HCT116 (cell line): ENCODE measurements at regions of chr5 and their contacts with region 1.

Region 1: DNA sequence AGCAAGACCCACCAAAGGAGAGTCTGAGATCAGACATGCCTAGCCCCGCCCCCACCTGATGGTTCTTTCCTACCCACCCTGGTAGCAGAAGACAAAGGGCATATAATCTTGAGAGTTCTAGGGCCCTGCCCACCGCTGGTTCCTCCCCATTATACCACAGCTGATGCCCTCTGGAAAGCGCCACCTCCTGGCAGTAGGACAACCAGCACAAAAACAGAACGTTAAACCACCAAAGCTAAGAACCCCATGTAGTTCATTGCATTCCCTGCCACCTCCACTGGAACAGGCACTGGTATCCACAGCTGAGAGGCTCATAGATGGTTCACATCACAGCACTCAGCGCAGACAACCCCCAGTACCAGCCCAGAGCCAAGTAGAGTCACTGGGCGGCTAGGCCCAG is 81.2 kb upstream of the TRPC7 start:
- DNase-seq: peak; percentile 8
- ATAC-seq: peak; percentile 83
- H3K4me3 ChIP-seq: no peak overlapping the region
- H3K27ac ChIP-seq: no peak overlapping the region
- H3K4me1 ChIP-seq: no peaks in the 10 kb centered on the region
- H3K27me3 ChIP-seq: 0 out of 2 replicates have a peak, but pooled peaks cover 9% of the 10 kb centered on the region
- CTCF ChIP-seq: peak; percentile 6 to 58 (median 56); a peak in 4 of 6 replicates
- POLR2A ChIP-seq: no peak
- RAD21 ChIP-seq: peak; percentile 18; the same call in 1 of the 2 replicates

Region 2: GRCh38 chr5:136482206-136482605 is 35.6 kb after region 1 on chr5:
- CTCF ChIA-PET with region 1: no interaction called
- POLR2A ChIA-PET with region 1: no interaction called
- RAD21 ChIA-PET with region 1: no interaction called
- intact Hi-C with region 1: loop called (anchors 1 kb)
- DNase-seq: no peak
- ATAC-seq: no peak
- H3K4me3 ChIP-seq: no peak overlapping the region
- H3K27ac ChIP-seq: no peak overlapping the region
- H3K4me1 ChIP-seq: no peaks in the 10 kb centered on the region
- H3K27me3 ChIP-seq: 0 out of 2 replicates have a peak, but pooled peaks cover 2% of the 10 kb centered on the region
- CTCF ChIP-seq: no peak
- POLR2A ChIP-seq: no peak
- RAD21 ChIP-seq: no peak

Region 3: DNA sequence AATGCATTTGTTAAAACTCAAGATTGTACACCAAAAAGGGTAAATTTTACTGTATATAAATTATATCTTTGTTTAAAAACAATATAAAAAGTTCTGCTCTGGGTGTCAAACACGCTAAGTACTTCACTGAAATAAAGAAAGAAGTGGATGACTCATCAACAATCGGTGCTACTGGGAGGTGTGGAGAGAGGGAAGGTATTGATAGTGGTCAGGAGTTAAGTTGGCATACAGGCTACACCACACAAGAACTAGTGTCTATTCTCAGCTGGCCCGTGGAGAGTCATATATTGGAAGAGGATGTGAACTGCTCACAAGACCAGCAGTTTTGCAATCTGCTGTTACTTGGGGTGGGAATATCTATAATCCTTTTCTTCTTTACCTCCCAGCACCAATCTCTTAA is 64.5 kb after region 1 on chr5:
- CTCF ChIA-PET with region 1: no interaction called
- POLR2A ChIA-PET with region 1: no interaction called
- RAD21 ChIA-PET with region 1: no interaction called
- intact Hi-C with region 1: no loop called
- DNase-seq: no peak
- ATAC-seq: no peak
- H3K4me3 ChIP-seq: no peak overlapping the region
- H3K27ac ChIP-seq: no peak overlapping the region
- H3K4me1 ChIP-seq: no peaks in the 10 kb centered on the region
- H3K27me3 ChIP-seq: no peaks in the 10 kb centered on the region
- CTCF ChIP-seq: no peak
- POLR2A ChIP-seq: no peak
- RAD21 ChIP-seq: no peak